Activated naive CD4-positive, alpha-beta T cell treated with anti-CD3 and anti-CD28 coated beads for 36 hours (primary cell): ENCODE measurements at regions of chr7 and their contacts with region 1.

Region 1: GRCh38 chr7:98870121-98870651 is 372 bp upstream of the TMEM130 start:
- DNase-seq: peak; percentile 85
- H3K4me3 Mint-ChIP-seq: peak overlapping the region; percentile 69
- H3K27ac Mint-ChIP-seq: no peak overlapping the region
- H3K4me1 Mint-ChIP-seq: no peaks in the 10 kb centered on the region
- H3K27me3 Mint-ChIP-seq: peaks cover 9% of the 10 kb centered on the region

Region 2: DNA sequence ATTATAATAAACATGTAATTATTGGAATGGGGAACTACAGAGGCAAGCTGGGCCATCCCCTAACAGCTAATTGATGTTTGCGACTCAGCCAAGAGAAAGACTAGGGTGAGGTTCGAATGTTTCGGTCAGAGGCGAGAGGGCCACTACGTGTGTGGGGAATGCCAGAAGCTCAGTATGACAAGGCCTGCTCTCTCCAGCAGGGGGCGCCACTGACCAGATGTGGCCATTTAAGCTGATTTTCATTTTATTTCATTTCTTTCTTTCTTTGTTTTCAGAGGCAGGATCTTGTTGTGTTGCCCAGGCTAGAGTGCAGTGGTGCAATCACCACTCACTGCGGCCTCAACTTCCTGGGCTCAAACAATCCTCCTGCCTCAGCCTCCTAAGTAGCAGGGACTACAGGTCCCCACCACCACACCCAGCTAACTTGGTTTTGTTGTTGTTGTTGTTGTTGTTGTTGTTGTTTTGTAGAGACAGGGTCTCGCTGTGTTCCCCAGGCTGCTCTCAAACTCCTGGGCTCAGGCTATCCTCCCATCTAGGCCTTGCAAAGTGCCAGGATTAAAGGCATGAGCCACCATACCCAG is 38.5 kb before region 1 on chr7:
- CTCF ChIA-PET with region 1: interaction called, 7 read pairs
- intact Hi-C with region 1: loop called (anchors 2 kb)
- DNase-seq: peak; percentile 62
- H3K4me3 Mint-ChIP-seq: no peak overlapping the region
- H3K27ac Mint-ChIP-seq: no peak overlapping the region
- H3K4me1 Mint-ChIP-seq: no peaks in the 10 kb centered on the region
- H3K27me3 Mint-ChIP-seq: peaks cover 4% of the 10 kb centered on the region

Region 3: DNA sequence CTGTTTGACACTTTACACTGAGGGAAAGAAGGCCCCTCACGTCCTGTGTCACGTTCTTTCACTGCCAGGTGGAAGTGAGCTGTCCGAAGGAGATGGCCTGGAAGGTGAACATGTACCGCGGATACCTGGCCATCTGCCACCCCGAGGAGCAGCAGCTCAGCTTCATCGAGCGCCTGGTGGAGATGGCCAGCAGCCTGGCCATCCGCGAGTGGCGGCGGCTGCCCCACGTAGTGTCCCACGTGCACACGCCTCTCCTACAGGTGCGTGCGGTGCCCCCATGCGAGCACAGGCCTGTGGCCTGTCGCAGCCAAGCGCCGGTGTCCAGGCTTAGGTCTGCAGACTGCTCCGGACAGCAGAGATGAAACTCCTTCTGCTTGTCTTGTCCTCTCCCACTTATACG is 111.5 kb after region 1 on chr7:
- CTCF ChIA-PET with region 1: no interaction called
- intact Hi-C with region 1: no loop called
- DNase-seq: no peak
- H3K4me3 Mint-ChIP-seq: no peak overlapping the region
- H3K27ac Mint-ChIP-seq: no peak overlapping the region
- H3K4me1 Mint-ChIP-seq: no peaks in the 10 kb centered on the region
- H3K27me3 Mint-ChIP-seq: no peaks in the 10 kb centered on the region